Posterior vena cava (tissue), 2 donors: ENCODE measurements at regions of chr16 and their contacts with region 1.

Region 1: GRCh38 chr16:87853411-87854052 is 15.8 kb downstream of the SLC7A5 start:
- DNase-seq: peak; percentile 98

Region 2: DNA sequence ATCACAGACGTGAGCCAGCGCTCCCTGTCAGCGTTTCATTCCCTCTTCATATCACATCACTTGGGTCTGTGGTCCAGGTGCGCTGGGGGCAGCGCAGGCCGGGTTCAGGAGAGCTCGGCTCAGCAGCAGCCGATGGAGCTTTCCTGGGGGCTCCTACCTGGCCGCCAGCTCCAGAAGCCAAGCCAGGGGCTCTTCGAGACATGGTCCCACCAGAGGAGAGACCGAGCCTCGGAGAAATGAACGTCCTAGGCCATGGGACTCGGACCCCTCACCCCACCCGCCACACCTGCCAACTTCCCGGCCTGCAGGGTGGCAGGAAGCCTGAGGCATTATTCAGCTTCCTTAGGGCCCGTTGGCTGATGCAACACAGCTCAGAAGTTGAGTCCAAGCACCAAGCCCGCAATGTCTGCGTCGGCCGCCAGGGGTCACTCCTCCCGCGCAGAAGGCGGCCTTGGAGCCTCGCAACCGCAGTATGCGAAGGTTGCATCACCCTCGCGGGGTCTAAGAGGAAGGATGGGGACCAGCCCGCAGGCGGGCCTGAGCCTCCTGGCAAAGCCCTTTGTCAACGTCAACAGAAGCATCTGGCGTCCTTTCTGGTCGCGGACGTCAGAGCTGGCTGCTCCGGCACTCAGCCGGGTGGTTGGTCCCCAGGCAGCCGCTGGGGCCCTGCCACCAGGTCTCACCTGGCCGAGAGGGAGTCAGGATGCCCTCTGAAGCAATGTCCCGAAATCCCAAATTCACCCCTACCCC is 74.5 kb before region 1 on chr16:
- intact Hi-C with region 1: loop called in 1 of 2 experiments (anchors 5 kb)
- DNase-seq: peak; percentile 98

Region 3: GRCh38 chr16:87864331-87864989 is 10.9 kb after region 1 on chr16:
- intact Hi-C with region 1: loop called in 1 of 2 experiments (anchors 1 kb)
- DNase-seq: no peak

Region 4: DNA sequence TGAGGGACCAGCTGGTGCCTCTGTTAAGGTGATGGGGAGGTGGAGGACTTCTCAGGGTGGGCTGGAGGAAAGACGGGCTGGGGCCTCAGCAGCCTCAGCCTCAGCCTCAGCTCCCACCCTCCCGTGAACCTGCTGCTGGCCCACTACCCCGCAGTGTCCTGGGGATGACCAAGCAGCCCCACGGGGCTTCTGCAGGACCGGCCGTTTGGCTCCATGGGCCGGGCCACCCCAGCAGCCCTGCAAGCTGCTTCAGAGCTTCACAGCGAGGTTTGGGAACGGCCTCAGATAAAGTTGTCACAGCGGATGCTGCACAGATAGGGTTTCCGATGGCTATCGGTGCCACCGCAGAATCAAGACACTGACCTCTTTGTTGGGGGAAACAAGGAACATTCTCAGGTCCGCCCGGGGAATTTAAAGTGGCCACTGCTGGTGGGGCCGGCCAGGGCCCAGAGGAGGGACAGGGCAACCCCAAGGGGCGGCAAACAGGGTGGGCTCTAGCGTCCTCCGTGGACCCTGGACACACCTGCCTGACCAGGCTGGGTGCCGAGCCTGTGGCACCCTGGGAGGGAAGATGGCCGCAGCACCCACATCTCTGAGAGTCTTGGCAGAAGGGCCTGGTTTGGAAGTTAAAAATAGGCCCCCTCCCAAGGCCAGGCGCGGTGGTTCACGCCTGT is 668.9 kb after region 1 on chr16:
- intact Hi-C with region 1: no loop called
- DNase-seq: no peak

Region 5: GRCh38 chr16:89060207-89060794 is 1206.8 kb after region 1 on chr16:
- intact Hi-C with region 1: no loop called
- DNase-seq: no peak